H1 (cell line): ENCODE measurements at regions of chr20 and their contacts with region 1.

Region 1: DNA sequence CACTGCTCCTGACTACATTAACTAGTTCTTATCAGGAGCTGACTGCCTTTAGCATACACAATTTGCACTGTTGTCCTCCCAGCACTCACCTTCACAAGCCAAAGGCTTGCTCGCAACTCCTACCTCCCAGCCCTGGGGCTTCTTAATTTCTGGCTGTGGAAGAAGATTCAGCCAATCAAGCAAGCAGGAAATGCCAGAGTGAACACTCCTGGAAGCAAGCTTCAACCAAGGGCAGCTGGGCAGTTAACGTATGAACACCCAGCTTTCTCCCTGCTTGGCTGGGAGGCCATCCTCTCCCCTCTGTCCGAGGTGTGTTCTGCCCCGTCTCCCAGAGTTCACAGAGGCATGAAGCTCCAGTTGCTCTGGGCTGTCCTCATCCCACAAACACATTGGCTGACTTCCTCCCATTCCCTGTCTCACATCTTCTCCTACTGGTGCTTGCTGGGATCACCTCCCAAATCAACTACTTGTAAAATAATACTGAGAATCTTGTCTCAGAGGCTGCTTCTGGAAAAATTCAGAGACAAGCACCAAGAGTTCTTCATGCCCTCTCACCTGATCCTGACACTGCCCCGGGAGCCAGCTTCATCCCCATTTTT is 15.3 kb upstream of the SRSF6 start:
- DNase-seq: no peak
- H3K4me3 ChIP-seq: no peak overlapping the region
- H3K27ac ChIP-seq: no peak overlapping the region
- H3K4me1 ChIP-seq: no peaks in the 10 kb centered on the region
- H3K27me3 ChIP-seq: no peaks in the 10 kb centered on the region; a peak in 1 of 7 replicates
- CTCF ChIP-seq: peak; percentile 6 to 41 (median 15); a peak in 2 of 4 replicates
- EP300 ChIP-seq: no peak
- POLR2A ChIP-seq: no peak
- RAD21 ChIP-seq: peak; percentile 42 to 44

Region 2: GRCh38 chr20:43430265-43431133 is 11.9 kb before region 1 on chr20:
- CTCF ChIA-PET with region 1: interaction called, 15 read pairs
- POLR2A ChIA-PET with region 1: interaction called, 3 read pairs
- DNase-seq: peak in 1 of 2 experiments; percentile 77
- H3K4me3 ChIP-seq: peak overlapping the region in 3 of 4 experiments; percentile 25 to 43 (median 27); a peak in 4 of 8 replicates
- H3K27ac ChIP-seq: peak overlapping the region; percentile 41; the same call in 1 of the 2 replicates
- H3K4me1 ChIP-seq: peaks cover 3 to 13% (median 6%) of the 10 kb centered on the region in 4 experiments; a peak in 5 of 7 replicates
- H3K27me3 ChIP-seq: no peaks in the 10 kb centered on the region; a peak in 1 of 7 replicates
- CTCF ChIP-seq: no peak
- EP300 ChIP-seq: no peak
- POLR2A ChIP-seq: no peak
- RAD21 ChIP-seq: no peak